ENCODE measurements at regions of chr4 and their contacts with region 1.

Region 1: GRCh38 chr4:159175085-159175988 is 72.5 kb downstream of the RAPGEF2 start:
- DNase-seq: peak; percentile 46 to 66 (median 63)
- ATAC-seq: peak; percentile 87 to 93
- H3K4me3 ChIP-seq: peak overlapping the region; percentile 15
- H3K27ac ChIP-seq: no peak overlapping the region
- H3K4me1 ChIP-seq: peaks cover 8% of the 10 kb centered on the region
- H3K27me3 ChIP-seq: no peaks in the 10 kb centered on the region

Region 2: DNA sequence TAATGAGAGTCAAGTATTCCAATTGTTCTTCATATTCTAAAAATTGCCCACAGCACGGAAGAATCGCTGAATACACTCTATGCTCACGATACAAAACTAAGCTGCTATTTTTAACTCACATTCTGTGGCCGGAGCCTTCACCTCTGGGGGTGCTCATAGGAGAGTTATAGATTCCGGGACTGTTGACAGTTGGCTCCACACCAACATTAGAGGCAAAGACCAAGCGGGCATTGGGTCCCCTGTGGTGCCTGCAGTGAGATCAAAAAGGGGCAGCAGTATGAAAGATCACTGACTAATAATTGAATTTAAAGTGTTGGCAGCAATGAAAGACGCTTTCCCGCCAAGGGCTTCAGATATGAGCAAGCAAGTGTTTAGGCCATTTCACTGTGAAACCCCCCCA is 819.0 kb before region 1 on chr4:
- intact Hi-C with region 1: no loop called
- DNase-seq: no peak
- ATAC-seq: no peak
- H3K4me3 ChIP-seq: no peak overlapping the region
- H3K27ac ChIP-seq: no peak overlapping the region
- H3K4me1 ChIP-seq: no peaks in the 10 kb centered on the region
- H3K27me3 ChIP-seq: no peaks in the 10 kb centered on the region

Region 3: GRCh38 chr4:158722917-158723793 is 452.2 kb before region 1 on chr4 and contains the start of gene PPID:
- intact Hi-C with region 1: loop called in 1 of 4 experiments (anchors 10 kb)
- DNase-seq: peak; percentile 87 to 94 (median 94)
- ATAC-seq: peak; percentile 98
- H3K4me3 ChIP-seq: peak within 1 kb of the TSS; percentile 88
- H3K27ac ChIP-seq: peak within 1 kb of the TSS; percentile 88
- H3K4me1 ChIP-seq: peaks cover 4% of the 10 kb centered on the region
- H3K27me3 ChIP-seq: no peaks in the 10 kb centered on the region
- total RNA-seq, gene PPID: 19.2 to 38.3 (median 28.0) TPM

Region 4: DNA sequence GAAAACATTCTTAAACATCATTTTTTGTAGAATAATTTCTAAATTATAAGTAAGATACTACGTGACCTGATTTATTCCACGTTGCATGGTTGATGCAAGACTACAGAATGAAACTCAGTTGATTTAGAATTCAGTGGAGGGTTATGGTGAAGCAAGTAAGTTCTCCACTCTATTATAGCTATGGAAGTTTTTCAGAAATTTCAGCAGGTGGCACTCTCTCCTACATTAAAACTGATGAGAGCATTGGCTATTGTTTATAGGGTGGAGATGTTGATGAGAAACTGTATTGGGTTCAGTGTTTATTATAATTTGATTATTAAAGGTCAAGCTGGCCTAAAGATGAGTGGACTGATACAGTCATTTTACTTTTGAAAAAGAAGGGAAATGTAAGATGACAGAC is 318.5 kb before region 1 on chr4:
- intact Hi-C with region 1: loop called in 3 of 4 experiments (anchors 10 kb)
- DNase-seq: no peak
- ATAC-seq: peak; percentile 68 to 78
- H3K4me3 ChIP-seq: no peak overlapping the region
- H3K27ac ChIP-seq: no peak overlapping the region
- H3K4me1 ChIP-seq: no peaks in the 10 kb centered on the region
- H3K27me3 ChIP-seq: no peaks in the 10 kb centered on the region

Region 5: DNA sequence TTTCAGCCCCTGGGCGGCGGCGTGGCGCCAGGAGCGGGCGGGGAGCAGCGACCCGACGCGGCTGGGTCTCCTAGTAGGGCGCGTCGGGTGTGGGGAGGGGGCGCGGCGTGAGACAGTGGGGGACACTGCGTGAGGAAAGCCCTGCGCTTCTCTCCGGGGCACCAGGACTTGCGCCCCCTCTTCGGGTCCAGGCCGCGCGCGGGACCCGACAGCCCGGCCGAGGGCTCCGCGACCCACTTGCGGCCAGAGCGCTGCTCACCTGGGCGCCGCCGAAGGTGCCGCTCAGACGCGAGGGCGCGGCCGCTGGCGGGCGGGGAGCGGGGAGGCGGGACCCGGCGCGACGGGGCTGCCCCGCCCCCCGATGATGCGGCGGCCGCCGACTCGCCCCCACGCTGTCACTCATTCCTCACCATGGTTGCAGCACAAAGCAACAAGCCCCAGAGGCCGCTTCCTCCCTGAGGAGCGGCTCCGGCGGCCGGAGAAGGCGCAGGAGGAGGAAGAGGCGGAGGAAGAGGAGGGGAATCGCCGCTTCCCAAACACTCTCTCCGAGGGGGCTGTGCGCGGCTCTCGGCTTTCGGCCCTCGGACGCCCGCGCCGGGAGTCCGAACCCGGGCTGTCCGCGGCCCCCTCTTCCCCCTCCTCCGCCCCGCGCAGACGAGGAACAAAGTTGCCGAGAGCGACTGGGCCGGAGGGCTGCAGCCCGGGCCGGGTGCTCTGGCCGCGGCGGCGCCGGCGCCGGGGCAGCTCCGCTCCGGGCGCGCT is 72.5 kb before region 1 on chr4 and contains the start of gene RAPGEF2:
- intact Hi-C with region 1: loop called in 2 of 4 experiments (anchors 5 to 10 kb)
- DNase-seq: peak; percentile 94 to 97 (median 96)
- ATAC-seq: peak; percentile 96 to 97
- H3K4me3 ChIP-seq: peak within 1 kb of the TSS; percentile 88
- H3K27ac ChIP-seq: peak within 1 kb of the TSS; percentile 81
- H3K4me1 ChIP-seq: peaks cover 2% of the 10 kb centered on the region
- H3K27me3 ChIP-seq: no peaks in the 10 kb centered on the region
- total RNA-seq, gene RAPGEF2: 35.7 to 38.6 (median 38.2) TPM

Measured in right cardiac atrium (tissue), 5 donors.